ENCODE measurements at regions of chr11 and their contacts with region 1.

Region 1: DNA sequence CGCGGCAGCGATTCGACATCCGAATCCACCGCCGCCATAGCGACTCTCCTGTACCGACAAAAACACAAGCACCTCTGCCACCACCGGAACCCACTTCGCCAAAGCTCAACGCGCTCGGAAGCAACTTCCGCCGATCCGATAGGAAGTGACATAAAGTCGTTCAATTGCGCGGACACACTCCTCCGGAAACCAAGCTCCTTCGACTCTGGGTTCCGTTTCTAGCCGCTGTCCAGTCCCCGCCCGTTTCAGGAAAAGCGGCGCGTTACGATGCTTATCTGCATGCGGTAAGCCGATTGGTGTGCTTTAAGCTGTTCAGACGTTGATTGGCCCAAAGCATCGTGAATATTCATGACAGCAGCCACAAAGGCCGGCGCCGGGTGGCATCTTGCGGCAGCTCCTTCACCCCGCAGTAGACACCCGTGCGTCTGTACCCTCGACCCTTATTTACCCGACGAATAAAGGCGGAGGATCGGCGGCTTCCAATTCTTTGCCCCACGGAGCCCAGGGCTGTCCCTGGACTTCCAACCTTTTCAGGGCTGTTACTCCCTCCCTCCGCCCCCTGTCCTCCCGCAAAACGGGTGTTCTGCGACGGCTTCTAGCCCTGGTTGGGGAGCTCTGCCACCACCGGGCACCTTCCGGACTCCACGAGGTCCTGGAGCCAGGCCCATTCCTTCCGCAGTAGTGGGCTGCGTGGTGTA is at the start of gene TUT1:
- DNase-seq: peak; percentile 97
- H3K4me3 ChIP-seq: peak within 1 kb of the TSS; percentile 77
- CTCF ChIP-seq: no peak

Region 2: DNA sequence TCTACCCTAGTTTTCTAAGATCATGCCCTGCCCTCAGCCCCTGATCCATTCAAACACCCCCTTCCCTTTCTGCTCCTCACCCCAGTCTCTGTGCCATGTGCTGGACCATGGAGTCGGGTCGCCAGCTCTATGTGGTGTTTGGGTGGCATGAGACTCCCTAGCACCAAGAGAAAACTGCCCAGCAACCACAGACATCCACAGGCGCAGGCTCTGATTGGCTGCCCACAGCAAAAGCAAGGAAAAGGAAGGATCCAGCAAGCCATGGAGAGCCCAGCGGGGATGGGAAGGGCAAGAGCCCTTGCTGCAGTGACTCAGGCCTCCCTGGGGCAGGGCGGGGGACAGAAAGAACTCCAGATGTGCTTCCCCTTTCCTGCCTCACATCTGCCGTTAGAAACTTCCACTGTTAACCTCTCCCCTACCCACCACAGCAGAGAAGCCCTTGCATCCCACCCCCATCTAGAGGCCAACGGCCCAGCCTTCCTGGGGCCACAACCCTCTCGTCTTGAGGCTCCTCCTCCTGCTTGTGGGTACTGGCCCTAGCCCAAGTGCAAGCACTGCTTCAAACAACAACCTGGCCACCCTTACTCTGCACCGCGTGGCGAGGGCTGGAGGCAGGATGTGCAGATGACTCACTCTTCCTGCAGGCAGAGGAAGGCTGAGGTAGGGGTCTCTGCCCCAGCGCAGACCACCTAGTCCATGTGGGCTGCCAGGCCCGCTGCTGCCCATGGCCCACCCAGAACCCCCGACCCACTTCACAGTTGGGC is 35.3 kb before region 1 on chr11:
- CTCF ChIA-PET with region 1: interaction called, 3 read pairs
- POLR2A ChIA-PET with region 1: interaction called, 13 read pairs
- DNase-seq: peak; percentile 70
- H3K4me3 ChIP-seq: peak overlapping the region; percentile 39
- CTCF ChIP-seq: no peak

Region 3: DNA sequence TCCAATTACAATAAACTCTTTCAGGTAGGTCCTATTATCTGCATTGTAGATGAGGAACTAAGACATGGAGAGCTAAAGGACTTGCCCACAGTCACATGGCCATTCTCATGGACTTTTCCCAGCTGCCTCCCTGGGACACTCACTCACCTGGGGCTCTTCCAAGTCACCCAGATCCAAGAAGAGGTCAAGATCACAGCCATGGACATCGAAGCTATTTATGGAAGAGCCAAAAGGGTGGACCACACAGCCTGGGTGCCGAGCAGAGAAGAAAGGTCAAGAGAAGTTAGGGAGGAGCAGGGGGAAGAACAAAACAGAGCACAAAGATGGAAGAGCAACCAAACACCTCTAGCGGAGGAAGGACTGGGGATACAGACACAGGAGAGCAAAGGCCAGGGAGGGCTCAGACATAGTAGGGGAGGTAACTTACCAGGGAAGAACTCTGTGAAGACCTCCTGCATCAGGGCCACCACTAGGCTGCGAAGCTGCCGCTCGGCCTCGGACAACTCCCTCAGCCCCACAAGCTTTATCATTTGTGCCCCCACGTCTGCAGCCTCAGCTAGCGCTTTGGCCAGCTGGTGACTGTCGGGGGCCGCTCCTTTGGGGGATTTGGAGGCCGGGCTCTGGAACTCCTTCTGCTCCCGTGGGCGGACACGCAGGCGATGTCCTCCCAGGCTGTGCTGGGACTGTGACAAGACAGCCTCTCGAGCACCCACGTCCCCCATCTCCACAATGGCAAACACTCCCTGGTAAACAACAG is 10.5 kb before region 1 on chr11:
- CTCF ChIA-PET with region 1: interaction called, 8 read pairs
- POLR2A ChIA-PET with region 1: interaction called, 16 read pairs
- DNase-seq: no peak
- H3K4me3 ChIP-seq: no peak overlapping the region
- CTCF ChIP-seq: no peak

Region 4: GRCh38 chr11:62621567-62622470 is 30.2 kb after region 1 on chr11 and contains the start of gene B3GAT3:
- CTCF ChIA-PET with region 1: interaction called, 16 read pairs
- POLR2A ChIA-PET with region 1: interaction called, 12 read pairs
- DNase-seq: peak; percentile 82
- H3K4me3 ChIP-seq: peak within 1 kb of the TSS; percentile 83
- CTCF ChIP-seq: peak; percentile 24

Region 5: DNA sequence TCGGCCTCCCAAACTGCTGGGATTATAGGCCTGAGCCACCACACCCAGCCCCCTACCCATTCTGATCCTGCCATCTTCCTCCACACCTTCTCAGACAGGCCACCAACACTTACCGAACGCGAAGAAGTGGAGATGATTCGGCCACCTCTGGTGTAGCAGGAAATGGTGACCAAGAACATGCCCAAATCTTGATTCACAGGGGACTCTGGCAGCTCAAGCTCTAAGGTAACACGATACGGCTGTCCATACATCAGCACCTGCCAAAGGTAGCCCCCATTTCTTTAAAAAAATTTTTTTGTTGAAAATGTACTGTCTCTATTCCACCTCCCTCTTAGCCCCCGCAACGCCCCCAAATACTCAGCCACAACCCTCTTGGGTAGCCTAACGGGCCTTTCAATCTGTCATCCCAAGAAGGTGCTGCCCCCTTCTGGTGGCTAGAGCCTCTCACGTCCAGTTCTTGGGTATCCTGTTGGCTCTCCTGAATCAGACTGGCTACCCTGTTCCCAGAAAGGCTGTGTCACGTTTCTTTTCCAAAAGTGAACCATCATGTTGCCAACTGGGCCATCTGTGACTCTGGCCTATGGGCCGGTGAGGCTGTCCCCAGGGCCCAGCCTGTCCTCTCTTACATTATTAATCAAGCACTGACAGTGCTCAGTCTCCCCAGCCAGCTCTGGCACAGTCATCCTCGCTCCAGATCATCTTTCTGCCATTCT is 103.0 kb after region 1 on chr11:
- CTCF ChIA-PET with region 1: interaction called, 21 read pairs
- POLR2A ChIA-PET with region 1: interaction called, 3 read pairs
- DNase-seq: no peak
- H3K4me3 ChIP-seq: no peak overlapping the region
- CTCF ChIP-seq: peak; percentile 84

Region 6: GRCh38 chr11:62847767-62848314 is 256.2 kb after region 1 on chr11:
- CTCF ChIA-PET with region 1: no interaction called
- POLR2A ChIA-PET with region 1: no interaction called
- DNase-seq: no peak
- H3K4me3 ChIP-seq: no peak overlapping the region
- CTCF ChIP-seq: no peak

Measured in AG04449 (cell line).